SK-N-SH (cell line): ENCODE measurements at regions of chr5 and their contacts with region 1.

Region 1: DNA sequence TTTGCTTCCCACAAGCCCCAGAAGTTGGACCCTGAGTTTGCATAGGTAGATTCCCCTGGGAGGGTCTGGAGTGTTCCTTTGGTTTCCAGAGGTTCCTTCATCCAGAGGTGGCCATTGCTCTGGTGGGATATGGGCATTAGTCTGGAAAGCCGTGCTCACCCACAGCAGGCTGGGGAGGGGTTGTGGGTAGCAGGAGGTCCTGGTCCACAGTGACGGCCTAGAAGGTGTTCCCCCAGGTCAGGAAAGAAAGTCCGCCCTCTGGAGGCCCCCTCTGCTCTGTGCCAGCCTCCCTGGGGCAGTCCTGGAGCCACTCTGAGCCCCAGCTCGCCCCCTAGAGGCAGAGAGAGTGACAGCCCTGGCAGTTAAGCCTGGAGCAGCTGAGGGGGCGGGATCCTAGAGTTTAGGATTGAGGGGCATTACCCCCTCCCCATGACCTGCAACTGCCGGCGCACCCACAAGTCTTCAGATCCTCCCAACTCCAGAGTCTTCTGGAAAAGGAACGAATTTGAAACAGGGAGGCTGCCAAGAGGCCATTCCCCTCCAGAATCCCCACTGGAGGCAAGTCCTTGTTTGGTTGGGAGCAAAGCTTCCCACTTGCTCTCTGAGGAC is 36.8 kb downstream of the NDST1 start:
- DNase-seq: peak; percentile 90
- H3K4me3 ChIP-seq: no peak overlapping the region
- H3K27ac ChIP-seq: peak overlapping the region in 1 of 2 experiments; percentile 70; a peak in 2 of 4 replicates
- H3K4me1 ChIP-seq: peaks cover 4 to 30% of the 10 kb centered on the region in 2 experiments; a peak in 3 of 4 replicates
- H3K27me3 ChIP-seq: no peaks in the 10 kb centered on the region
- CTCF ChIP-seq: peak; percentile 63
- EP300 ChIP-seq: no peak
- RAD21 ChIP-seq: peak; percentile 64

Region 2: DNA sequence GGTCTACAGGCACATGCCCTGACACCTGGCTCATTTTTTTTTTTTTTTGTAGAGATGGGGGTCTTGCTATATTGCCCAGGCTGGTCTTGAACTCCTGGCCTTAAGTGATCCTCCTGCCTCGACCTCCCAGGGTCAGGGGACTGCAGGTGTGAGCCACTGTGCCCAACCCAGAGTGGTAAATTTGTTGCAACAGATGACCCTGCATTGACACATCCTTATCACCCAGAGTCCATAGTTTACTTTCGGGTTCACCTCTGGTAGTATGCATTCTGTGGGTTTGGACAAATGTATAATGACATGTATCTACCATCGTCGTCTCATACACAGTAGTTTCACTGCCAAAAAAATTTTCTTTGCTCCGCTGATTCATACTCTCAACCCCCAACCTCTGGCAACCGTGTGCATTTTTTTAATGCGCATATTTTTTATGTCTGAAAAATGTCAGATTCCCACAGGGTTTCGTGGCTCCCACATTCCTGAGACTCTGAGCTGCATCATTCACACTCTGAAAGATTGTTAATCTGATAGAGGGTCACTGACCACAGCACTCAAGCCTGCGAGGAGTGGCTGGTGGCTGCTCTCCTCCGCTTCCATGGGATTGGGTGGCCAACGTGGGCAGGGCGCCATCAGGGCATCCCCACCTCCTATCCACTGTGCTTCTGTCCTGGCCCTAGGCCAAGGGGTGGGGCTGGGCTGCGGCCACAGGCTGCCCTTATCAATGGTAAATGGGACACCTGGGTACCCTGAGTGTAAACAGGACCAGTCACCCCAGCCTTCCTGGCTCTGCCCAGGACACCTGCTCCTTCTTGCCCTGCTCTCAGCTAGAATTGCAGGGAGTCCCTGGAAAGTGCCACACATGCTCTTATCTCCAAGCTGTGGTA is 27.2 kb before region 1 on chr5:
- CTCF ChIA-PET with region 1: interaction called, 19 read pairs
- POLR2A ChIA-PET with region 1: no interaction called
- DNase-seq: peak; percentile 87
- H3K4me3 ChIP-seq: no peak overlapping the region
- H3K27ac ChIP-seq: peak overlapping the region; percentile 52 to 68
- H3K4me1 ChIP-seq: peaks cover 41 to 46% of the 10 kb centered on the region in 2 experiments; a peak in 3 of 4 replicates
- H3K27me3 ChIP-seq: no peaks in the 10 kb centered on the region
- CTCF ChIP-seq: no peak
- EP300 ChIP-seq: peak; percentile 59 to 95; a peak in 3 of 4 replicates
- RAD21 ChIP-seq: no peak; the same call in 1 of the 2 replicates

Region 3: GRCh38 chr5:150624334-150625163 is 79.8 kb after region 1 on chr5:
- CTCF ChIA-PET with region 1: no interaction called
- POLR2A ChIA-PET with region 1: no interaction called
- DNase-seq: peak; percentile 91
- H3K4me3 ChIP-seq: peak overlapping the region in 1 of 2 experiments; percentile 42; a peak in 2 of 4 replicates
- H3K27ac ChIP-seq: peak overlapping the region in 1 of 2 experiments; percentile 20; a peak in 1 of 4 replicates
- H3K4me1 ChIP-seq: peaks cover 9 to 57% of the 10 kb centered on the region in 2 experiments; a peak in 2 of 4 replicates
- H3K27me3 ChIP-seq: no peaks in the 10 kb centered on the region
- CTCF ChIP-seq: no peak
- EP300 ChIP-seq: no peak
- RAD21 ChIP-seq: no peak

Region 4: DNA sequence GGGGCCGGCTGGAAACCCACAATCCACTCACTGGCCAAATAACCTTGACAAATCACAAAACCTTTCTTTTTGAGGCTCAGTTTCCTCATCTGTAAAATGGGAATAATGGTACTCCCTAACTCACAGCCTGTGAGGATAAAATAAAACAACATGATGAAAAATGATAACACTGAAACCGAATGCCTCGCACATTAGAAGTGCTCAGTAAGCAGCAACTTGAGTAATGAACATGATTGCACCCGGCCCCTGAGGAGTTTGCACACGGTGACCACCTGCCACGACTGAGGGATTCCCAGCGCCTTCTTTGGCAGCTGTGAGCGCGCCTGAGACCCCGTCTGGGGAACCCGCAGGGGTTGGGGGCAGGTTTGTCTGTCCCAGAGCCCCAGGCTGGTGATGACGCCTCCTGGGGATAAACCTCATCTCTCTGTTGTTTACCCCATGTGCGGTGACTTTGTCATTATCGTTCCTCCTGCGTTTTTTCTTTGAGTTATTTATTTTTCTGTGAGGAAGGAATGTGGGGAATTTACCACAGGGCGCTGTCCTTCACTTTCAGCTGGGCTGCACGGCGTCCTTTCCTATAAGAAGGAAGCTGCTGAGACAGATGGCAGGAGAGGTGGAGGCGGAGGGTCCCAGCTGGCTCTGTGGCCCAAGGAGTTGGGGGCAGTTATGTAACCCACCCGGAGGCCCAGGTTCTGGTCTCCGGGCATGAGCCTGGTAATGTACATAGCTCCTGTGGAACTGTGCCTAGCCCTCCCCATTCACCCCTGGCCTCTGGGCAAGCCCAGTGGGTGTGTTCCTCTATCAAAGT is 92.7 kb after region 1 on chr5:
- CTCF ChIA-PET with region 1: no interaction called
- POLR2A ChIA-PET with region 1: no interaction called
- DNase-seq: no peak
- H3K4me3 ChIP-seq: no peak overlapping the region
- H3K27ac ChIP-seq: peak overlapping the region; percentile 68 to 94
- H3K4me1 ChIP-seq: peaks cover 54 to 65% of the 10 kb centered on the region in 2 experiments
- H3K27me3 ChIP-seq: no peaks in the 10 kb centered on the region
- CTCF ChIP-seq: no peak
- EP300 ChIP-seq: peak in 1 of 2 experiments; percentile 61; a peak in 1 of 4 replicates
- RAD21 ChIP-seq: no peak